ENCODE measurements at regions of chr13 and their contacts with region 1.

Region 1: DNA sequence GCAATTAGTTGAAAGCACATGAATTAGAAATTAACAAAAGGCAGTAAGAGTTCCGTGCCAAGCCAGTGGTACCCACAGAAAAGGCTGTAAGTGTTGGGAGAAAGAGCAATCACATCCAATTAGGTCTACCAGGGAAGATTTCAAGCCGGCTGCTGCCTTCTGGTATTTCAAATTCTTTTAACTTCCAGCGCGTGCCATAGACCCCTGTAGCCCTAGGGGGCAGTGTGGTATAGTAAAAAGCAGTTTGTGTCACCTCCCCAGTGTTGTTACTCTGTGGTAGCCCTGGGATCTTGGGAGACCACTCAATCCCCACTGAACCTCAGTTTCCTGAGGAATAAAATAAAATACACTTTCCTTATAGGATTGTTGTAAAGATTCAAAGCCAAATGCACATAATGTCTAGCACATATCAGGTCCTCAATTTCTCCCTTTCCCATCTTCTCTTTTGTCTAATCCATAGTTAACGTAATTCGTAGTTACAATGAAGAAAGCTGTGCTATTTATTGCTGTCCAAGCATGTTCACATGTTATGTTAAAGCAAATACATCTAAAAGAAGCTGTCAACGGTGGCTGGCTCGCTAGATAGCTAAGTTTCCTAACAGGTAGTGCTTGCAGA is 230.2 kb downstream of the TDRD3 start:
- DNase-seq: peak; percentile 37 to 74
- H3K4me3 ChIP-seq: no peak overlapping the region
- H3K4me1 ChIP-seq: no peaks in the 10 kb centered on the region
- H3K27me3 ChIP-seq: 0 out of 2 replicates have a peak, but pooled peaks cover 3% of the 10 kb centered on the region

Region 2: GRCh38 chr13:61156753-61157152 is 529.6 kb after region 1 on chr13:
- in situ Hi-C with region 1: no loop called
- DNase-seq: no peak
- H3K4me3 ChIP-seq: no peak overlapping the region
- H3K4me1 ChIP-seq: no peaks in the 10 kb centered on the region
- H3K27me3 ChIP-seq: no peaks in the 10 kb centered on the region

Region 3: DNA sequence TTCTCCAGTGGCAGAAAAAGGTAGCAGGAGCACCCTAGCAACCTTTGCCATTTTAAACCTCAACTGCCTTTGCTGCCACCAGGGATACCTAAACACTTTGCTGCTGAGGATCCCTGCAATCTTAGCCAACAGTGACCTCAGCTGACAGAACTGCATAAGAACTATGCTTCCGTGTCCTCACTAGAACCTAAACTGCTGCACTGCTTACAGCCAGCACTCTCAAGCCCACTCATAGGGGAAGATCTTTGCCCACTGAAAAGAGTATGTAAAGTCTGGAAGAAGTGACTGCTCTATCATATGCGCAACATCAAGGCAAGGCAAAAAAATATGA is 1058.5 kb after region 1 on chr13:
- in situ Hi-C with region 1: loop called (anchors 25 kb)
- DNase-seq: peak in 1 of 2 experiments; percentile 21
- H3K4me3 ChIP-seq: no peak overlapping the region
- H3K4me1 ChIP-seq: no peaks in the 10 kb centered on the region
- H3K27me3 ChIP-seq: no peaks in the 10 kb centered on the region